Caco-2 (cell line): ENCODE measurements at regions of chr9 and their contacts with region 1.

Region 1: DNA sequence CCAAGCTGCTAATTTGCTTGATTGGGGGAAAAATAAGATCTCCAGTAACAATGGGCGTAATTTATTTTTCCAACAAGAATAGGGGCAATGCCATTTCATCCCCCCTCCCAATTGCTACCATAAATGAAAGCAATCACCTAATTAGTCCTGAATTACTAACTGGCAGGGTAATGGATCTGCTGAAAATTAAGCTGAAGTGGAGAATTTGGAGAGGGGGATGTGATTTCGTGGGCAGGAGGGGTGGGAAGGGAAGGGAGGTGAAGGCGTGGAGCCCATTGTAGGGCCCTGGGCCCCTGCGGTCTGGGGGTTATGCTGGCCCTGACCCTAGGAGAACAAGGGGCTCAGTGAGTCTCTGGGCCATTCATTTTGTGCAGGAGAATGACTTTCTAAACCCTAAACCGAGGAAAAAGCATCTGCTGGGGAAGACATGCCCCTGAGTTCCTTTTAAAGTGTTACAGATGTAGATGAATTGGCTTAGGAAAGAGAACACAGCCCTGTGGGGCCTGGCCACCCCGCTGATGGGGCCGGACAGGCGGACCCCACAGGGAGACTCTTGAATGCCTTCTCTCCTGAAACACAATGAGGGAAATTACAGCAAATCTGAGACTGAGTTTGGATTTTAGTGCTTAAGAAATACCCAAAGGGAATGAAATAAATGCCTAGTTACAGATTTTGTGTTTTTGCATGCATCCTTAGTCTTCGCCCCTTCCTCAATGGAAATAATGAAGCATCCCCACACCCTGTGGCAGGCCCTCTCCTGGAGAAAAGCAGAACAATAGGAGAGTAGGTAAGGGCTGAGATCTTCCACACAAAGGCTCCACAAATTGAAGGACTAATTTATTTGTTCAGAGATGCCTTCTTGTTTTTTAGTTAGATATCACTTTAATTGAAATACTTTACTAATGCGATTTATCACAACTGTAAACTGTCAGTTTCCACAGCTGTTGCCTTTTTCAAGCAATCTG is 143.2 kb downstream of the PSAT1 start:
- DNase-seq: no peak
- H3K4me3 ChIP-seq: no peak overlapping the region
- H3K4me3 Mint-ChIP-seq: no peak overlapping the region
- H3K27ac Mint-ChIP-seq: no peak overlapping the region
- H3K4me1 ChIP-seq: no peaks in the 10 kb centered on the region
- H3K4me1 Mint-ChIP-seq: no peaks in the 10 kb centered on the region
- H3K27me3 ChIP-seq: no peaks in the 10 kb centered on the region
- H3K27me3 Mint-ChIP-seq: peaks cover 3% of the 10 kb centered on the region
- CTCF ChIP-seq: no peak

Region 2: DNA sequence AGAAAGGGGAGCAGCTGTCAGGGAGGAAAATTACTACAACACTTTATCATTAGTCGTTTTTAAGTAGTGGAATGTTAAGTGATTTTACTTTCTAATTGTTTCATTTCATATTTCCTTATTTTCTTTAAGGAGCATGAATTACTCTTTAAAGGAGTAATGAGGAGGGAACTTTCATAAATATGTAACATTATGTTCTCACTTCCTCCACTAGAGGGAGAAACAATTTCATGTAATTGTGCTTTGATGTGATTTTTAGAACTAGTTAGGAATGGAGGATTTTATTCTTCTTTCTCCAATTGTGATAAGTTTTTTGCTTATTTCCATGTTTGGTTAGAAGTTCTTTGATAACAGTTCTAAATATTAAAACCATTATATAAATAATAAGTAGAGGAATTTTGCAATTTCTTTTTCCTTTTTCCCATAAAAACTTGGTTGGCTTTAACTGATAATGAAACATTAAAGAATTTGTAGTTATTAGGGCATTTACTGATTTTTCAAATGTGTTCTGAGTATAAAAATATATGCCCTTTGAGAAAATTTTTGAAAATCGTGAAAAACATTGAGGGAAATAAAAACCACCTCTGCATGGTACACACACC is 178.6 kb before region 1 on chr9:
- CTCF ChIA-PET with region 1: no interaction called
- POLR2A ChIA-PET with region 1: no interaction called
- intact Hi-C with region 1: no loop called
- DNase-seq: no peak
- H3K4me3 ChIP-seq: no peak overlapping the region
- H3K4me3 Mint-ChIP-seq: no peak overlapping the region
- H3K27ac Mint-ChIP-seq: no peak overlapping the region
- H3K4me1 ChIP-seq: no peaks in the 10 kb centered on the region
- H3K4me1 Mint-ChIP-seq: no peaks in the 10 kb centered on the region
- H3K27me3 ChIP-seq: no peaks in the 10 kb centered on the region
- H3K27me3 Mint-ChIP-seq: no peaks in the 10 kb centered on the region
- CTCF ChIP-seq: no peak

Region 3: GRCh38 chr9:78601957-78602565 is 161.9 kb after region 1 on chr9:
- CTCF ChIA-PET with region 1: no interaction called
- POLR2A ChIA-PET with region 1: no interaction called
- intact Hi-C with region 1: loop called (anchors 10 kb)
- DNase-seq: peak in 1 of 2 experiments; percentile 2
- H3K4me3 ChIP-seq: no peak overlapping the region
- H3K4me3 Mint-ChIP-seq: no peak overlapping the region
- H3K27ac Mint-ChIP-seq: no peak overlapping the region
- H3K4me1 ChIP-seq: no peaks in the 10 kb centered on the region
- H3K4me1 Mint-ChIP-seq: no peaks in the 10 kb centered on the region
- H3K27me3 ChIP-seq: no peaks in the 10 kb centered on the region
- H3K27me3 Mint-ChIP-seq: peaks cover 3% of the 10 kb centered on the region
- CTCF ChIP-seq: peak in 1 of 2 experiments; percentile 29